ENCODE measurements at regions of chr1 and their contacts with region 1.

Region 1: DNA sequence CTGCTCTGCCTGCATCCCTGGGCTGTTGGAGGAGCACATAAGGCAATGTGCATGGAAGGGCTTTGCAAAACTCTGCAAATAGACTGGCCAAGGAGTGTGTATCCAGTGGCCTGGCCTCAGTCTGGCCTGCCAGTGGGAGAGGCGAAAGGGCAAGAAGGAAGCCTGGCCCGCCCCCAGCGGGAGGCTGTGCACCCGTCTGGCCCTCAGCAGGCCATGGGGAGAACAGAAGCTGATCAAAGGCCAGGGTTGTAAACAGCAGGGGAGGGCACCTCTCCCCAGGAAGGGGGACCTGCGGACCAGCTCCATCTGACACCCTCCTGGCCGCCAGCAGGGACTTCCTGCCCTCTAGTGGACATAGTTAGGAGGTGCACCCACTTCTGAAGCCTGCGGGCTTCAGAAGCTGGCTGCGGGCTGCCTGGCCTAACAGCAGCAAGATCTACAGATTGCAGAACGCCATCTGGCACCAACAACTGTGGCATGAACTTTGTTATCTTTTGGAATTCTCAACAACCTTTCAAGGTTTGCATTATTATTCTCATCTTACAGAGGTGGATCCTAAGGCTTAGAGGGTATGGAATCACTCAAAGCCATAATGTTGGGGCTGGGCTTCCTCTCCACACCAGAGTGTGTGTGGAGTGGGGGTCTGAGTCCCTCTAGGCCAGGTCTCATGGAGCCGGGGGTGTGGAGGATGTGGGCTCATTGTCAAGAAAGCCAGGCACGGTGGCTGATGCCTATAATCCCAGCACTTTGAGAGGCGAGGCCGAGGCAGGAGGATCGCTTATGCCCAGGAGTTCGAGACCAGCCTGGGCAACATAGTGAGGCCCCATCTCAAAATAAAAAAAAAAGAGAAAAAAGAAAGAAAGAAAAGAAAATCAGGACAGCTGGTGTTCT is 18.9 kb upstream of the CDK18 start:
- DNase-seq: peak; percentile 47
- ATAC-seq: peak; percentile 80
- H3K4me3 Mint-ChIP-seq: no peak overlapping the region
- H3K27ac Mint-ChIP-seq: no peak overlapping the region
- H3K4me1 Mint-ChIP-seq: peaks cover 29% of the 10 kb centered on the region
- H3K27me3 Mint-ChIP-seq: peaks cover 36% of the 10 kb centered on the region
- CTCF ChIP-seq: peak; percentile 73

Region 2: GRCh38 chr1:205321164-205321958 is 164.2 kb before region 1 on chr1 and contains the start of gene NUAK2:
- CTCF ChIA-PET with region 1: interaction called, 28 read pairs
- POLR2A ChIA-PET with region 1: no interaction called
- intact Hi-C with region 1: no loop called
- DNase-seq: peak; percentile 83
- ATAC-seq: peak; percentile 86
- H3K4me3 Mint-ChIP-seq: peak within 1 kb of the TSS; percentile 97
- H3K27ac Mint-ChIP-seq: peak within 1 kb of the TSS; percentile 98
- H3K4me1 Mint-ChIP-seq: peaks cover 78% of the 10 kb centered on the region
- H3K27me3 Mint-ChIP-seq: peaks cover 2% of the 10 kb centered on the region
- CTCF ChIP-seq: no peak
- total RNA-seq, gene NUAK2: 26.1 and 26.2 TPM in 2 replicates

Region 3: DNA sequence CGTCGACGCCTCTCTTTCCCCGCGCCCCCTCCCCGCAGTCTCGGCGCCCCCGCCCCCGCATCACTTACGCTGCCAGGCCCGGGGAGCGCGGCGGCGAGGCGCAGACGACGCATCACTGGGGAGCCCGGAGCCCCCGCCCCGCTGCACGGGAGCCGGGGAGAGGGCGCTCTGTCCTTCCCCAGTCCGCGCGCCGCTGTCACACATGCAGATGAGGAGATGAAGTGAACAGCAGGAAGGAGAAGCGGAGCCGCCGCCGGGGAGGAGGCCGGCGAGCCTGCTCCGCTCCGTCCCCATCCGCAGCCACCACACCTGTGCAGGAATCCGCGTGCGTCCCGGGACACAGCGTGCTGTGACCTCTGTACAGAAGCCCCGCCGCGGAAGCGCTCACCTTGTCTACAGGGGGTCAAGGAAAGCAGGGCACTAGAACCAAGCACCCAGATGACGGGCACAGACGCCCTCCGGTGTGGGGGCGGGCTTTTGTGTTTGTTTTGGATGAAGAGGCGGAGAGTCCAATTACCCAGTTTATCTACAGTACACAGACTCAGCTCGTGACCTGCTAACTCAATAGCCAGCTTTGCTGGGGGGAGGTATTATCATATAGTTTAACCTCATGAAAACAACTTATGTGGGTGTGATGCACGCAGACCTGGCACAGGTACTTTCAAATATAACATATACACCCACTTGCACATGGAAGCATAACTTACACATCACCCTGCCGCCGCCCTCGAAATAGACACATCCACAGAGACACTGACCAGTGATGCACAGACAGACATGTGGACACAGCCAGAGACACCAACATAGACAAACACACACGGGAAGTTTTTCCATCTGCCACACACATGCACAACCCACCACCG is 141.3 kb before region 1 on chr1:
- CTCF ChIA-PET with region 1: interaction called, 18 read pairs
- POLR2A ChIA-PET with region 1: no interaction called
- intact Hi-C with region 1: loop called (anchors 2 kb)
- DNase-seq: peak; percentile 49
- ATAC-seq: peak; percentile 59
- H3K4me3 Mint-ChIP-seq: peak overlapping the region; percentile 74
- H3K27ac Mint-ChIP-seq: no peak overlapping the region
- H3K4me1 Mint-ChIP-seq: peaks cover 40% of the 10 kb centered on the region
- H3K27me3 Mint-ChIP-seq: peaks cover 11% of the 10 kb centered on the region
- CTCF ChIP-seq: no peak

Region 4: DNA sequence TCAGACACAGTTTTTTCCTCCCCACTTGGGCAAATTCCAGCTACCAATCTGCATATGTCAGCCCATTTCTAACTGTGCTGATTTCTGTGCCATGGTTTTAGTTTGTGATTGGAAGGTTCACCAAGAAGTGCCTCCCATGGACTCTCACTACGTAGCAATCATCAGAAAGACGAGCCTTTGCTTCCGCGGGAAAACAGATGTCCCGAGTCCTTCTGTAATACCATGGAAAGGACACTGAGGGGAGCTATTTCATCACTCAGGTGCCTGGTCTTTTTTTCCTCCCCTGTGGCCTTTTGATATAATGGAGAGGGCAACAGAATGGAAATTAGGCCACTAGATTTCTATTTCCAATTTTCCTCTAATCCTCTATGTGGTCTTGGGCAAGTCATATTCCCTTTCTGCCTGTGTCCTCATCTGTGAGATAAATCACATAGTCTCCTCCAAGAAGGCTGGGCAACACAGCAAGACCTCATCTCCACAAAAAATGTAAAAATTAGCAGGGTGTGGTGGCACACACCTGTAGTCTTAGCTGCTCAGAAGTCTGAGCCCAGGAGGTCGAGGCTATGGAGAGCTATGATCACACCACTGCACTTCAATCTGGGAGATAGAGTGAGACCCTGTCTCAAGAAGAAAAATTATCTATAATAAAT is 88.5 kb before region 1 on chr1:
- CTCF ChIA-PET with region 1: interaction called, 90 read pairs
- POLR2A ChIA-PET with region 1: no interaction called
- intact Hi-C with region 1: loop called (anchors 1 kb)
- DNase-seq: no peak
- ATAC-seq: peak; percentile 52
- H3K4me3 Mint-ChIP-seq: no peak overlapping the region
- H3K27ac Mint-ChIP-seq: no peak overlapping the region
- H3K4me1 Mint-ChIP-seq: no peaks in the 10 kb centered on the region
- H3K27me3 Mint-ChIP-seq: peaks cover 12% of the 10 kb centered on the region
- CTCF ChIP-seq: no peak

Region 5: DNA sequence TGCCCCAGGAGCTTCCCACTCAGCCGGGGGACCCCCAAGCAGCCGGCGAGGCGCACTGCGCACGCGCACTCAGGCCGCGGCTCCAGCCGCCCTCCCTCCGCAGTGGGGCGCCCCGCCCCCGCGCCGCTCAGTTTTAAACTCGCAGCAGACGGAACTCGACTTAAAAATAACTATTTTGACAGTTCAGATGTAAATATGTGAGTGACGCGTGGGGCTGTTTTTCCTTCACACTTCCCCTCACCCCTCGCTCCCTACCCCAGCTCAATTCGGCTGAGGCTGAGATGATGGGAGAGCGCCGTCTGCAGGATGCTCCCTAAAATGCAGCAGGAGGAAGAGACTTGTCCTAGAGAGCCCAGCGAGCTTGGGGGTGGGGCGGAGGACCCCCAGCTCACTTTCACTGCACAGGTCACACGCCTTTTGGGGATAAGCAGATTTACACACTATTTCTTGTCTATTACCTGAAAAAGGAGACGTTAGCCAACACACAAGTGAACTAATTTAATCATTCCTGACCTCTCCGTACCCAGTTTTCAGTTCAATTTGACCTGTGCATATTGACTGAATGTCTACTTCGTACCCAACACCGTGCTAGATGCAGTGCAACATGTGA is 54.8 kb before region 1 on chr1:
- CTCF ChIA-PET with region 1: interaction called, 11 read pairs
- POLR2A ChIA-PET with region 1: interaction called, 3 read pairs
- intact Hi-C with region 1: loop called (anchors 2 kb)
- DNase-seq: peak; percentile 67
- ATAC-seq: peak; percentile 85
- H3K4me3 Mint-ChIP-seq: peak overlapping the region; percentile 84
- H3K27ac Mint-ChIP-seq: peak overlapping the region; percentile 55
- H3K4me1 Mint-ChIP-seq: peaks cover 39% of the 10 kb centered on the region
- H3K27me3 Mint-ChIP-seq: no peaks in the 10 kb centered on the region
- CTCF ChIP-seq: no peak

Region 6: GRCh38 chr1:205631727-205632373 is 146.3 kb after region 1 on chr1 and contains the start of gene ELK4:
- CTCF ChIA-PET with region 1: interaction called, 3 read pairs
- POLR2A ChIA-PET with region 1: no interaction called
- intact Hi-C with region 1: loop called (anchors 1 kb)
- DNase-seq: peak; percentile 99
- ATAC-seq: peak; percentile 83
- H3K4me3 Mint-ChIP-seq: peak within 1 kb of the TSS; percentile 96
- H3K27ac Mint-ChIP-seq: peak within 1 kb of the TSS; percentile 96
- H3K4me1 Mint-ChIP-seq: peaks cover 46% of the 10 kb centered on the region
- H3K27me3 Mint-ChIP-seq: no peaks in the 10 kb centered on the region
- CTCF ChIP-seq: no peak
- total RNA-seq, gene ELK4: 130 and 141 TPM in 2 replicates